ENCODE measurements at regions of chr19 and their contacts with region 1.

Region 1: DNA sequence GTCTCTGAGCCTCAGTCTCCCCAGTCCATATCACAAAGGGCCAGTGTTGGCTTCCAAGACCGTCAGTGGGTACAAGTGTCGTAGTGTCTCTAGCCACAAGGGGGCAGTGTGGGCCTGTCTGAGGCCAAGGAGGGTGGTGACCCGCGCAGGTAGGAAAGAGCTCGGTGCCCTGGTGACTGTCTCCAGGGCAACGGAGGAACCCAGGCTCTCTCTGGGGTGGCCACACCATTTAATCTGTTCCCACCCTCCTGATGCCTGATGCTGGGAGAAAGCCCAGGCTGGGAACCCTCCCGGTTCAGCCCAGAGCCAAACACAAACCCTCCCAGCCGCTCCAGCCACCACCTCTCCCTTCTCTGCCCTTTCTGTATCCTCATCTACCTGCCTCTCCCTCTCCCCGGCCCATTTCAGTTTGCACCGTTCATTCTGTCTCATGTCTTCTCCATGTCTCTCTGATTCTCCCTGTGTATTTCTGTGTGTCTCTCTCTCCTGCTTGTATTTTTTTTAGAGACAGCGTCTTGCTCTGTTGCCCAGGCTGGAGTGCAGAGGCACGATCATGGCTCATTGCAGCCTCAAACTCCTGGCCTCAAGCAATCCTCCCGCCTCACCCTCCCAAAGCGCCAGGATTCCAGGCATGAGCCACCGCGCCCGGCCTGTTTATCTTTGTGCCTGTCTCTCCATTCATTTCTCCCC is 17.5 kb upstream of the MEIS3 start:
- DNase-seq: peak; percentile 87
- H3K4me3 Mint-ChIP-seq: peak overlapping the region; percentile 13
- H3K27ac Mint-ChIP-seq: no peak overlapping the region
- H3K4me1 Mint-ChIP-seq: peaks cover 51% of the 10 kb centered on the region
- H3K27me3 Mint-ChIP-seq: peaks cover 29% of the 10 kb centered on the region

Region 2: GRCh38 chr19:47447470-47448359 is 10.9 kb after region 1 on chr19:
- CTCF ChIA-PET with region 1: interaction called, 14 read pairs
- POLR2A ChIA-PET with region 1: no interaction called
- DNase-seq: peak; percentile 74
- H3K4me3 Mint-ChIP-seq: peak overlapping the region; percentile 46
- H3K27ac Mint-ChIP-seq: no peak overlapping the region
- H3K4me1 Mint-ChIP-seq: peaks cover 45% of the 10 kb centered on the region
- H3K27me3 Mint-ChIP-seq: peaks cover 66% of the 10 kb centered on the region

Region 3: GRCh38 chr19:47514869-47515588 is 78.2 kb after region 1 on chr19 and contains the start of gene NAPA:
- CTCF ChIA-PET with region 1: interaction called, 19 read pairs
- POLR2A ChIA-PET with region 1: interaction called, 6 read pairs
- DNase-seq: peak; percentile 100
- H3K4me3 Mint-ChIP-seq: peak within 1 kb of the TSS; percentile 98
- H3K27ac Mint-ChIP-seq: peak within 1 kb of the TSS; percentile 97
- H3K4me1 Mint-ChIP-seq: peaks cover 88% of the 10 kb centered on the region
- H3K27me3 Mint-ChIP-seq: no peaks in the 10 kb centered on the region
- total RNA-seq, gene NAPA: 117 to 119 TPM

Region 4: DNA sequence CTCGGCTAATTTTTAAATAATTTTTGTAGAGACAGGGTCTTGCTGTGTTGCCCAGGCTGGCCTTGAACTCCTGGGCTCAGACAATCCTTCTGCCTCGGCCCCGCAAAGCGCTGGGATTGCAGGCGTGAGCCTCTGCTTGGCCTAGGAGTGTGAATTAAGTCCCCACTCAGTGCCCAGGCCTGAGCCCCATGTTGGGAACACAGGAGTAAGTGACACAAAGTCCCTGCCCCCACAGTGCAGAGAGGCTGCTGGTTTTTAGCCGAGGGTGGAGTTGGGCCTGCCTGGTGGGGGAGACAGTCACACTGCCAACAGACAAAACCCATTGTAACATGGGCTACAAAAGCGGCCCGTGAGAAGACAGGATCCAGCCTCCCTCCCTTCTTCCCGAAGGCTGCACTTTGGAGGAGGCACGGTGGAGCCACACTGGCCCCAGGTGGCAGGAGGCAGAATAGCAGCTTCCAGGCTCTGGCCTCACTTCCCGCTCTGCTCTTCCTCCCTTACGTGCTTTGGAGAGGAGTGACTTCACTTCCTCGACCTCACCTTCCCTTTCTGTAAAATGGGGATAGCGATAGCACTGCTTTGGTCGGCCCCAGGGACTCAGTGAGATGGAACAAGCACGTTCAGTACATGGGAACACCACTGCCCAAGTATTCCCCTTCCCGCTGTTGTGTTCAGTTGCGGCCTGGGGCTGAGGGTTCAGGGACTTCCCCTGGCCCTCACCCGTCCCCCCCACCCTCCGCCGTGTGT is 261.2 kb after region 1 on chr19:
- CTCF ChIA-PET with region 1: interaction called, 154 read pairs
- POLR2A ChIA-PET with region 1: interaction called, 5 read pairs
- DNase-seq: peak; percentile 69
- H3K4me3 Mint-ChIP-seq: no peak overlapping the region
- H3K27ac Mint-ChIP-seq: peak overlapping the region; percentile 21
- H3K4me1 Mint-ChIP-seq: no peaks in the 10 kb centered on the region
- H3K27me3 Mint-ChIP-seq: no peaks in the 10 kb centered on the region

Region 5: GRCh38 chr19:47707135-47707925 is 270.5 kb after region 1 on chr19:
- CTCF ChIA-PET with region 1: interaction called, 154 read pairs
- POLR2A ChIA-PET with region 1: interaction called, 5 read pairs
- DNase-seq: peak; percentile 82
- H3K4me3 Mint-ChIP-seq: no peak overlapping the region
- H3K27ac Mint-ChIP-seq: no peak overlapping the region
- H3K4me1 Mint-ChIP-seq: peaks cover 6% of the 10 kb centered on the region
- H3K27me3 Mint-ChIP-seq: peaks cover 8% of the 10 kb centered on the region

Measured in activated CD4-positive, alpha-beta memory T cell treated with anti-CD3 and anti-CD28 coated beads, Interleukin-2, amount 10 ng/mL, durations not matched to agents 7 days and 5 days (primary cell).